ENCODE measurements at regions of chr1 and their contacts with region 1.

Region 1: DNA sequence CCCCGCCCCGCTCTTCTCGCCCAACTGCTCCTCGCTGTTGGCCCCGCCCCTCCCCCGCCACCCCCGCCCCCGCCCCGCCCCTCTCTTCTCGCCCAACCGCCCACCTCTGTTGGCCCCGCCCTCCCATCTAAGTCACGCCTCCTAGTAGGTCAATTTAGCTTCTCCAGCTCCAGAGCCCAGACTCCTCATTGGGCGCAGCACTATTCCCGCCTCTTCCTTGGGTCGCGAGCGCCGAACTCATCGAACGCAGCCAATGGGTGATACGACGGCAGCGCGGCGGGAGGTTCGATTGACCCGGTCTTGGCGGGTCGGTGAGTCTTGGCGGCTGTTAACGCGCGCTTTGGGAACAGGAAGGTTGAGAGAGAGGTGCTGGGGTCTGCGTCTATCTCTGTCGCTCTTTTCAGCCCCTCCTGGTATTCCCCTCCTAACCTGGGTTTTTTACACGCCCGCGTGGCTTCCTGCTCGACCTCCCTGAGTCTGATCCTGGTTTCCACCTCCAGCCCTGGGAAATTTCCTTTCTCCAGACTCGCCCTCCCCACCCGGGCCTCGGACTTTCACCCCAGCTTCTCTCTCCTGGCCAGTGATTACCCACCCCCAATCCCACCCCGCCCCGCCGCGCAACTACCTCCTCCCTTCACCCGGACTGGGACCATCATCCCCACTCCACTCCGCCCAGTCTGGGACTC is at the start of gene RAD54L:
- DNase-seq: peak; percentile 86
- ATAC-seq: peak; percentile 96
- H3K4me3 Mint-ChIP-seq: peak within 1 kb of the TSS; percentile 95
- H3K27ac Mint-ChIP-seq: peak within 1 kb of the TSS; percentile 86
- H3K4me1 Mint-ChIP-seq: peaks cover 19% of the 10 kb centered on the region
- H3K27me3 Mint-ChIP-seq: no peaks in the 10 kb centered on the region
- CTCF ChIP-seq: no peak
- total RNA-seq, gene RAD54L: 2.9 and 3.7 TPM in 2 replicates

Region 2: GRCh38 chr1:45543581-45544417 is 703.8 kb before region 1 on chr1:
- CTCF ChIA-PET with region 1: no interaction called
- POLR2A ChIA-PET with region 1: interaction called, 10 read pairs
- intact Hi-C with region 1: no loop called
- DNase-seq: peak; percentile 55
- ATAC-seq: peak; percentile 84
- H3K4me3 Mint-ChIP-seq: peak overlapping the region; percentile 76
- H3K27ac Mint-ChIP-seq: peak overlapping the region; percentile 94
- H3K4me1 Mint-ChIP-seq: peaks cover 56% of the 10 kb centered on the region
- H3K27me3 Mint-ChIP-seq: no peaks in the 10 kb centered on the region
- CTCF ChIP-seq: no peak

Region 3: GRCh38 chr1:46062651-46063319 is 184.8 kb before region 1 on chr1:
- CTCF ChIA-PET with region 1: no interaction called
- POLR2A ChIA-PET with region 1: no interaction called
- intact Hi-C with region 1: no loop called
- DNase-seq: no peak
- ATAC-seq: no peak
- H3K4me3 Mint-ChIP-seq: no peak overlapping the region
- H3K27ac Mint-ChIP-seq: no peak overlapping the region
- H3K4me1 Mint-ChIP-seq: peaks cover 16% of the 10 kb centered on the region
- H3K27me3 Mint-ChIP-seq: no peaks in the 10 kb centered on the region
- CTCF ChIP-seq: no peak

Region 4: GRCh38 chr1:46197964-46198811 is 49.4 kb before region 1 on chr1 and contains the start of gene POMGNT1:
- CTCF ChIA-PET with region 1: no interaction called
- POLR2A ChIA-PET with region 1: no interaction called
- intact Hi-C with region 1: loop called (anchors 1 kb)
- DNase-seq: peak; percentile 84
- ATAC-seq: peak; percentile 95
- H3K4me3 Mint-ChIP-seq: peak within 1 kb of the TSS; percentile 85
- H3K27ac Mint-ChIP-seq: peak within 1 kb of the TSS; percentile 30
- H3K4me1 Mint-ChIP-seq: peaks cover 21% of the 10 kb centered on the region
- H3K27me3 Mint-ChIP-seq: peaks cover 4% of the 10 kb centered on the region
- CTCF ChIP-seq: no peak
- total RNA-seq, gene POMGNT1: 37.4 and 39.5 TPM in 2 replicates

Region 5: GRCh38 chr1:46340404-46341221 is 93.0 kb after region 1 on chr1 and contains the start of gene NSUN4:
- CTCF ChIA-PET with region 1: interaction called, 42 read pairs
- POLR2A ChIA-PET with region 1: interaction called, 26 read pairs
- intact Hi-C with region 1: loop called (anchors 1 kb)
- DNase-seq: peak; percentile 69
- ATAC-seq: peak; percentile 81
- H3K4me3 Mint-ChIP-seq: peak within 1 kb of the TSS; percentile 99
- H3K27ac Mint-ChIP-seq: peak within 1 kb of the TSS; percentile 98
- H3K4me1 Mint-ChIP-seq: peaks cover 33% of the 10 kb centered on the region
- H3K27me3 Mint-ChIP-seq: no peaks in the 10 kb centered on the region
- CTCF ChIP-seq: peak; percentile 50
- total RNA-seq, gene NSUN4: 35.3 and 38.6 TPM in 2 replicates

Region 6: GRCh38 chr1:46718727-46719622 is 471.4 kb after region 1 on chr1 and contains the start of gene EFCAB14:
- CTCF ChIA-PET with region 1: no interaction called
- POLR2A ChIA-PET with region 1: interaction called, 3 read pairs
- intact Hi-C with region 1: loop called (anchors 10 kb)
- DNase-seq: peak; percentile 100
- ATAC-seq: peak; percentile 99
- H3K4me3 Mint-ChIP-seq: peak within 1 kb of the TSS; percentile 89
- H3K27ac Mint-ChIP-seq: peak within 1 kb of the TSS; percentile 88
- H3K4me1 Mint-ChIP-seq: peaks cover 37% of the 10 kb centered on the region
- H3K27me3 Mint-ChIP-seq: peaks cover 2% of the 10 kb centered on the region
- CTCF ChIP-seq: no peak
- total RNA-seq, gene EFCAB14: 70.2 and 79.8 TPM in 2 replicates